Activated B cell treated with CpG ODN at 0.5 μM for 24 hours (primary cell): ENCODE measurements at regions of chr18 and their contacts with region 1.

Region 1: DNA sequence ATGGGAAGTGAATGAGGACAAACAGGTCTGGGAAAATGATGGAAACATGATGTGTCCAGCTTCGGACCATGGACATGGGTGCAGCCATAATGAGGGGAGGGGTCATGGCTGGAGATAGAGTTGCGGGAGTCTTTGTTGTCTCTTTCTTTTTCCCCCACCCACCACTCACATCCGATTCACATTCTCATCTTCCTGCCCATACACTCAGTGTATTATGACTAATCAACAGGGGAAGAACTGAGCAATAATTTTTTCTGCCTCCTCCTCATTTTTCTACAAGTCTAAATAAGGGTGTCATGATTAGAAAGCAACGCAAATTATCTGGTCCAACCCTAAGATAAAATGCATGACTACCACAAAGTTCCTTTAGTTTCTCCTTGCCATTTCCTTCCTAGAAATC is 5.7 kb upstream of the SERPINB2 start:
- DNase-seq: no peak
- ATAC-seq: no peak
- H3K4me3 Mint-ChIP-seq: no peak overlapping the region
- H3K27ac Mint-ChIP-seq: no peak overlapping the region
- H3K4me1 Mint-ChIP-seq: no peaks in the 10 kb centered on the region
- H3K27me3 Mint-ChIP-seq: peaks cover 11% of the 10 kb centered on the region
- CTCF ChIP-seq: no peak

Region 2: DNA sequence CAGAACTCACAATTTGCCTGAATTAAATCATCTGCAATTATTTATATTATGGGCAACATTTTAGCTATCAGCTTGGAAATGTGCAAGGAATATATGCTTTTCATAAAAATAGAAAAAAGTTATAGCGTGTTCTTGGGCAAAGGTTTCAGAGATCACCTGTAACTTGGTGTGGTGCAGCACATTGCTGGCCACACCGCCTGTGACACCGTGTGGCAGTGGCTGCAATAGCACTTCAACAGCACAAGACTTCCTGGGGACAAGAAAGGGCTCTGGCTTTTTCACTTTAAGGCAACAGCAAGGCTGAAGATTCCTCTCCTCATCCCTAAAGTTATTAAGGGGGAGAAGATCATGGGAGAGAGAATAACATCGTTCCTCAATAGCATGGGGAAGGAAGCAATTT is 205.3 kb before region 1 on chr18:
- CTCF ChIA-PET with region 1: no interaction called
- POLR2A ChIA-PET with region 1: interaction called, 13 read pairs
- intact Hi-C with region 1: no loop called
- DNase-seq: no peak
- ATAC-seq: no peak
- H3K4me3 Mint-ChIP-seq: no peak overlapping the region
- H3K27ac Mint-ChIP-seq: no peak overlapping the region
- H3K4me1 Mint-ChIP-seq: no peaks in the 10 kb centered on the region
- H3K27me3 Mint-ChIP-seq: peaks cover 3% of the 10 kb centered on the region
- CTCF ChIP-seq: no peak

Region 3: DNA sequence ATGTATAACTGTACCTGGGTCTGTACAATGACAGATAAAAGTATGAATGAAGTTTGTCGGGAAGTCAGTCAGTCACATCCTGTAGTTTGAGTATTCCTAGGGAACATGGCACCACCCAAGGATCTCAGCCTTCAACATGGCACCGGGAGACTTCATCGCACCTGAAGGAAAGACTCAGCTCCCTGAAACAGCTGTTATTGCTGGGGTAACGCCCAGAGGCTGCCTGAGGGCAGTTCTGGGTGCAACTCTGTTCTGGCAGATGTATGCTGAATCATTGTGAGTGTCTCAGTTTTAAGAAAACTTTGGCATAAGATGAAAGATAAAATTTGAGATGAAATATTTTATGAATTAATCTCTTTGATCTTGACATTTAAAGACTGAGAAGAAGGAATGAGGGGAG is 44.3 kb before region 1 on chr18:
- CTCF ChIA-PET with region 1: no interaction called
- POLR2A ChIA-PET with region 1: no interaction called
- intact Hi-C with region 1: no loop called
- DNase-seq: no peak
- ATAC-seq: no peak
- H3K4me3 Mint-ChIP-seq: no peak overlapping the region
- H3K27ac Mint-ChIP-seq: no peak overlapping the region
- H3K4me1 Mint-ChIP-seq: no peaks in the 10 kb centered on the region
- H3K27me3 Mint-ChIP-seq: peaks cover 16% of the 10 kb centered on the region
- CTCF ChIP-seq: no peak

Region 4: DNA sequence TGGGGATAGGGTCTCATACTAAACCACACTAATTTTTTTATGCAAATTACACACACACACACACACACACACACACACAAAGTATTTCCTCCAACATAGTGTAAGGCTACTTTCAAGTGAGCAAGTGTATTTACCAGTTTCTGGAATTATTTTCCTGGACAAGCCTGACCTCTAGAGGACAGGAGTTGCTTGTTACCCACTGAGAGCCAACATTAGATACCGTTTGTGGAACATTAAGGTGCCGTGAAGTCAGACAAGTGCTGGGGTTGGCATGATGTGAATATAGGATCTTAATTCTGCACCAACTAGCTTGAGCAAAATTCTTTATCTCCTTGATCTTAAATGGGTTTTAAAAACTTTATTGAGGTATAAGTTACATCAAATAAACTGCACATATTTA is 33.7 kb before region 1 on chr18:
- CTCF ChIA-PET with region 1: no interaction called
- POLR2A ChIA-PET with region 1: no interaction called
- intact Hi-C with region 1: no loop called
- DNase-seq: no peak
- ATAC-seq: no peak
- H3K4me3 Mint-ChIP-seq: no peak overlapping the region
- H3K27ac Mint-ChIP-seq: no peak overlapping the region
- H3K4me1 Mint-ChIP-seq: no peaks in the 10 kb centered on the region
- H3K27me3 Mint-ChIP-seq: peaks cover 16% of the 10 kb centered on the region
- CTCF ChIP-seq: no peak